ENCODE measurements at regions of chrX and their contacts with region 1.

Region 1: DNA sequence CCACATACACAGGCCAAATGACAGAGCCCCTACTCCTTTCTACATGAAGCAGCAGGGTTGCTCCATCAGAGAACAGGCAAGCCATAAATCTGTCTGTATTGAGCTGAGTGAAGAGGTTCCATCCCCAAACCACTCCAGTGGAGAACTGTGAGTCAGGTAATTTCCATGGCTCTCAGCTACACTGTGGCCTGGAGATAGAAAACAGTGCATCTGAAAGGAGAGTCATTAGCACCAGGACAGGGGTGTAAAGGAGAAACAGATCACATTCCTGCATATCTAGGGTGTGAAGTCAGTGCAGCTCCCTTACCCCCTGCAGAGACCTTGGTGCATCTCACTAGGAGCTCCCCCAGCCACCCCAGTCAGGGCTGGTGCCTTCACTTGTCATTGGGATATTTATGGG is 314.7 kb downstream of the CHIC1 start:
- DNase-seq: no peak
- H3K4me3 ChIP-seq: no peak overlapping the region
- H3K27ac ChIP-seq: no peak overlapping the region
- H3K4me1 ChIP-seq: no peaks in the 10 kb centered on the region
- H3K27me3 ChIP-seq: no peaks in the 10 kb centered on the region

Region 2: DNA sequence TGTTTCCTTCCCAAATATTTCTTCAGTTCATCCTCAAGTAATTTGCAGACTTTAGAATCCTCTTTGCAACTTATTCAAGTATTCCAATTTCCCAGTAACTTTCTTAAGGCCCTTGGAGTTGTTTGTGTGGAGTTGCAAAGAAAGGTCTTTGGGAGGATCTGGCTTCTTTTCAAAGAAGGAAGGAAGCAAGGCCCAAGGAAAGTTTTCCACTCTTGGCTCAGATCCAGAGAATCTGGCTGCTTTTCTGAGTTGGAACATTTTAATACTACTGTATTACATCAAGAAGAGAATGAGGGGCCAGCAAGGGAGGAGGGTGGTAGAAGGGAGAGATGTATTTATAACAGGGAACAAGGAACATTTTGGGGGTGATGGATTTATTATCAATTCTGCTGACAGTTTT is 420.4 kb before region 1 on chrX:
- in situ Hi-C with region 1: no loop called
- DNase-seq: no peak
- H3K4me3 ChIP-seq: no peak overlapping the region
- H3K27ac ChIP-seq: no peak overlapping the region
- H3K4me1 ChIP-seq: no peaks in the 10 kb centered on the region
- H3K27me3 ChIP-seq: no peaks in the 10 kb centered on the region

Region 3: DNA sequence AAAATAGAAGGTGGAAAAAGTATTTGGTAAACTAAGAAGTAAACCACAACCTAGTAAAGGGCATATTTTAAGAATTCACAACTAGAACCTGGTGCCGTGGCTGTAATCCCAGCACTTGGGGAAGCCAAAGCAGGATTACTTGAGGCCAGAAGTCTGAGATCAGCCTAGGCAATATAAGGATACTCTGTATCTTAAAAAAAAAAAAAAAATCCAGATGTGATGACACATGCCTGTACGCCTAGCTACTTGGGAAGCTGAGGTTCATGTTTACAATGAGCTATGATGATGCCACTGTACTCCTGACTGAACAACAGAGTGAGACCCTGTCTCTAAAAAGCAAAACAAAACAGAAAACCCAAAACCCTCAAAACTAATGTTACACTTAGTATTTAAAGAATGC is 131.4 kb after region 1 on chrX:
- in situ Hi-C with region 1: loop called (anchors 10 kb)
- DNase-seq: peak; percentile 20
- H3K4me3 ChIP-seq: no peak overlapping the region
- H3K27ac ChIP-seq: 0 out of 2 replicates have a peak overlapping the region, but pooled peaks have one; percentile 27
- H3K4me1 ChIP-seq: peaks cover 9% of the 10 kb centered on the region
- H3K27me3 ChIP-seq: no peaks in the 10 kb centered on the region

Region 4: DNA sequence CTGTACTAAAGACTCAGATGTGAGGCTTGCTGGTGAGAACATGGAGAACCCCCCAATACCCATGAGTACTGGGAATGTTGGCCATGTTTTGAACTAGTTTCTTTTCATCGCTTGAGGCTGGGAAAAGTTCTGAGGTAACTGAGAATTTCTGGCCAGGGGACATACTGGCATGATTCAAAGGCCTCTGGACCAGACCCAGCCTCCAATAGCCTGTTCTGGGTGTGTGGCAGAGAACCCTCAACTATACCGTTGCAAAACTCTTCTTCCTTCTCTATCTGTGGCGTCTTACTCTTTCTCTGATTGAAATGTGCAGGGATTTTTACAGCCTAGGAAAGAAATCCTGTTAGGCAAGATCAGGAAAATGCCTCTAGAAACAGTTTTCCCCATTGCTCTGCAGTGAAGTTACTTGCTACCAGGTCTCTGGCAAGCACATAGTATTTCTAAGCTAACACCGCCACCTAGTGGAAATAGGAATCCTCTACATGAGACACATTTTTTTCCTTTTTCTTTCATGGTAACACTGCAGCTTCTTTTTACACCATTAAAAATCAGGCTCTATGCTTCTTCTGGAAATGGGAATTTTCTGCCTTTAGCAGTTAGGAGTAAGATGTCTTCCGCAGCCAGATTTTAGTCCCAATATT is 255.6 kb after region 1 on chrX:
- in situ Hi-C with region 1: loop called (anchors 10 kb)
- DNase-seq: peak; percentile 73
- H3K4me3 ChIP-seq: no peak overlapping the region
- H3K27ac ChIP-seq: no peak overlapping the region
- H3K4me1 ChIP-seq: 0 out of 2 replicates have a peak, but pooled peaks cover 3% of the 10 kb centered on the region
- H3K27me3 ChIP-seq: no peaks in the 10 kb centered on the region

Region 5: DNA sequence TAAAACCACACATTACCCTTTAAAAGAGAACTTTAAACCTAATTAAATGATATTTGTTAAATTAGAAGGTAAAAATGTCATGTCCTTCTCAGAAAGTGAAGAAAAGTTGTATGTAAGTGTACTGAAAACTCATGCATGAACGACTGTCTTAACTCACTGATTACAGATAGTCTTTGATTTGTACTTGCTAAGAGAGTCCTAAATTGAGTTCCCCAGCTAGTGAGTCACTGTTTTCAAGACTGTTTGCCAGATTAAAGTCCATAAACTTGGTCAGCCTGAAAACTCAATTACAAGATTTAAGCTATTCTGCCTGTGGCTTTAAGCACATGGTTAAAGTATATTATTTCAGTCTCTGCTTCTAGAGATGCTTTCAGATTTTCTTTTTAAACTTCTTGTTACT is 301.4 kb after region 1 on chrX:
- in situ Hi-C with region 1: no loop called
- DNase-seq: peak; percentile 39
- H3K4me3 ChIP-seq: no peak overlapping the region
- H3K27ac ChIP-seq: no peak overlapping the region
- H3K4me1 ChIP-seq: 0 out of 2 replicates have a peak, but pooled peaks cover 4% of the 10 kb centered on the region
- H3K27me3 ChIP-seq: no peaks in the 10 kb centered on the region